ENCODE measurements at regions of chr10 and their contacts with region 1.

Region 1: DNA sequence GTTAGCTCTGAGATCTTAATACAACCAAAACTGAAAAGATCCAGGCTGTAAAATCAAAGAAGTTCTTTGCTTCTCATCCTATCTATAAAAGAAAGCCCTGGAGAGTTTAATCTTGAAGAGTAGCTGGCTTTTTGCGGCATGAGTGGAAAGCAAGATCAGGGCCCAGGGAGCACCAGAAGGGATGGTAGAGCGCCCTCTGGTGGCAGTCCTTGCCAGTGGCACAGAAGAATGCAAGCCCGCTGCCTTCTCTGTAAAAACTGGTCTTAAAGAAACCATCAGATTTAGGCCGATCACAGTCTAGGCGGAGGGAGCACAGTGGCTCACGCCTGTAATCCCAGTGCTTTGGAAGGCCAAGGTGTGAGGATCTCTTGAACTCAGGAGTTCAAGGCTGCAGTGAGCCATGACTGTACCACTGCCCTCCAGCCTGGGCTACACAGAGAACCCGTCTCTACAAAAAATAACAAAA is 35.6 kb downstream of the CPN1 start:
- DNase-seq: peak; percentile 50
- ATAC-seq: peak; percentile 93
- H3K4me3 ChIP-seq: no peak overlapping the region
- H3K27ac ChIP-seq: no peak overlapping the region
- H3K4me1 ChIP-seq: peaks cover 7% of the 10 kb centered on the region; the same call in 1 of the 2 replicates
- H3K27me3 ChIP-seq: no peaks in the 10 kb centered on the region
- CTCF ChIP-seq: peak; percentile 92
- EP300 ChIP-seq: no peak
- POLR2A ChIP-seq: no peak
- RAD21 ChIP-seq: peak; percentile 83

Region 2: GRCh38 chr10:99976886-99977665 is 69.0 kb before region 1 on chr10:
- CTCF ChIA-PET with region 1: interaction called, 6 read pairs
- POLR2A ChIA-PET with region 1: no interaction called
- in situ Hi-C with region 1: no loop called
- intact Hi-C with region 1: loop called (anchors 2 kb)
- DNase-seq: no peak
- ATAC-seq: no peak
- H3K4me3 ChIP-seq: no peak overlapping the region
- H3K27ac ChIP-seq: no peak overlapping the region
- H3K4me1 ChIP-seq: peaks cover 9% of the 10 kb centered on the region
- H3K27me3 ChIP-seq: no peaks in the 10 kb centered on the region
- CTCF ChIP-seq: no peak
- EP300 ChIP-seq: no peak
- POLR2A ChIP-seq: no peak
- RAD21 ChIP-seq: no peak

Measured in HepG2 (cell line).